CD4-positive, alpha-beta memory T cell (primary cell): ENCODE measurements at regions of chr18 and their contacts with region 1.

Region 1: GRCh38 chr18:54828281-54828881 is at the start of gene RAB27B:
- DNase-seq: peak; percentile 57 to 82 (median 61)
- H3K4me3 ChIP-seq: peak within 1 kb of the TSS; percentile 68 to 87
- H3K4me3 Mint-ChIP-seq: peak within 1 kb of the TSS; percentile 88 to 96 (median 92)
- H3K27ac ChIP-seq: peak within 1 kb of the TSS; percentile 58
- H3K27ac Mint-ChIP-seq: peak within 1 kb of the TSS; percentile 53 to 91 (median 82)
- H3K4me1 ChIP-seq: peaks cover 15% of the 10 kb centered on the region
- H3K4me1 Mint-ChIP-seq: peaks cover 20 to 39% (median 25%) of the 10 kb centered on the region in 4 donors
- H3K27me3 ChIP-seq: no peaks in the 10 kb centered on the region
- H3K27me3 Mint-ChIP-seq: peaks cover 0 to 2% of the 10 kb centered on the region in 2 donors
- total RNA-seq, gene RAB27B: 2.2 to 3.1 TPM

Region 2: GRCh38 chr18:54717673-54718407 is 110.5 kb before region 1 on chr18:
- CTCF ChIA-PET with region 1: interaction called, 3 read pairs
- POLR2A ChIA-PET with region 1: interaction called, 3 read pairs
- intact Hi-C with region 1: loop called (anchors 5 kb)
- DNase-seq: peak; percentile 38 to 57 (median 47)
- H3K4me3 ChIP-seq: peak overlapping the region; percentile 37 to 42
- H3K4me3 Mint-ChIP-seq: peak overlapping the region; percentile 64 to 84 (median 78)
- H3K27ac ChIP-seq: peak overlapping the region; percentile 27
- H3K27ac Mint-ChIP-seq: peak overlapping the region in 6 of 7 donors; percentile 26 to 61 (median 39)
- H3K4me1 ChIP-seq: peaks cover 42% of the 10 kb centered on the region
- H3K4me1 Mint-ChIP-seq: peaks cover 25 to 53% (median 43%) of the 10 kb centered on the region in 4 donors
- H3K27me3 ChIP-seq: no peaks in the 10 kb centered on the region
- H3K27me3 Mint-ChIP-seq: no peaks in the 10 kb centered on the region

Region 3: GRCh38 chr18:54867131-54867530 is 38.8 kb after region 1 on chr18:
- CTCF ChIA-PET with region 1: no interaction called
- POLR2A ChIA-PET with region 1: no interaction called
- intact Hi-C with region 1: no loop called
- DNase-seq: no peak
- H3K4me3 ChIP-seq: no peak overlapping the region
- H3K4me3 Mint-ChIP-seq: no peak overlapping the region
- H3K27ac ChIP-seq: no peak overlapping the region
- H3K27ac Mint-ChIP-seq: no peak overlapping the region
- H3K4me1 ChIP-seq: no peaks in the 10 kb centered on the region
- H3K4me1 Mint-ChIP-seq: peaks cover 0 to 1% (median 0%) of the 10 kb centered on the region in 4 donors
- H3K27me3 ChIP-seq: no peaks in the 10 kb centered on the region
- H3K27me3 Mint-ChIP-seq: no peaks in the 10 kb centered on the region